PC-9 (cell line): ENCODE measurements at regions of chr13 and their contacts with region 1.

Region 1: GRCh38 chr13:63075126-63075525 is 1659.5 kb upstream of the PCDH20 start:
- DNase-seq: no peak
- H3K4me3 ChIP-seq: no peak overlapping the region
- H3K27ac ChIP-seq: no peak overlapping the region
- H3K4me1 ChIP-seq: no peaks in the 10 kb centered on the region
- H3K27me3 ChIP-seq: no peaks in the 10 kb centered on the region
- CTCF ChIP-seq: no peak

Region 2: DNA sequence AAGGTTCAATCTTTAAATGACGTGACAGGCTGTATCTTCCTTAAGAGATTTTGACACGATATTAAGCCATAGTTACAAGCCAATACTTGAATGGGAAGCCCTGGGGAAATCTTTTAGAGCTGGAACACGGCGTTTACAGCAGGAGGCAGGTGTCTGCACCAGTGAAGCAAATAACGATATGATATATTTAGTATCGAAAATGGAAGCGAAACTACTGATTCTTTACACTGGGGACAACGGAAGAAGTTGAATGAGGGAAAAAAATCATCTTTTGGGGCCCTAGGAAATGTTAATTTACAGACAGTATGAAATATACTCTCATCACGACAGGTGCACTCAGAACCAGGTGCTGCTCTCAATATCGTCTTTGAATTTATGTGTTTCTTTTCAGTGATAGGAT is 865.6 kb before region 1 on chr13:
- CTCF ChIA-PET with region 1: no interaction called
- POLR2A ChIA-PET with region 1: no interaction called
- intact Hi-C with region 1: no loop called
- DNase-seq: no peak
- H3K4me3 ChIP-seq: no peak overlapping the region
- H3K27ac ChIP-seq: no peak overlapping the region
- H3K4me1 ChIP-seq: no peaks in the 10 kb centered on the region
- H3K27me3 ChIP-seq: no peaks in the 10 kb centered on the region
- CTCF ChIP-seq: no peak

Region 3: DNA sequence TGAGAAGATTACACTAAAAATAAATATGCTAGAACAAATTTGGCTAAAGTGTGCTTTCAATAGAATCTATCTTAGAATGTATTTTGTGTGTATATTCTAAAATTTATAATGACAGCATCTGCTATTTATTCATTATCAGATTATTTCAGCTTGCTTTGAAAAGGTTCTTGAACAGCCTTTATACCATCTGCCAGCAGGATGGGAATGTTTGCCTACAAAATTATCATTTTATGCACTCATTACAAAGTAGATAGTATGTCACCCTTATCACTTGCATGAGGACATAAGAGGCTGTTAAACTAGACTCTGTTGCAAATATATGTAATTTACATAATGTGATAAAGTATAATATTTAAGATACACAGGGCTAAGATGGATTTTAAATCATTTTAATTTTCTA is 372.6 kb before region 1 on chr13:
- CTCF ChIA-PET with region 1: no interaction called
- POLR2A ChIA-PET with region 1: no interaction called
- intact Hi-C with region 1: no loop called
- DNase-seq: no peak
- H3K4me3 ChIP-seq: no peak overlapping the region
- H3K27ac ChIP-seq: no peak overlapping the region
- H3K4me1 ChIP-seq: no peaks in the 10 kb centered on the region
- H3K27me3 ChIP-seq: no peaks in the 10 kb centered on the region
- CTCF ChIP-seq: no peak

Region 4: DNA sequence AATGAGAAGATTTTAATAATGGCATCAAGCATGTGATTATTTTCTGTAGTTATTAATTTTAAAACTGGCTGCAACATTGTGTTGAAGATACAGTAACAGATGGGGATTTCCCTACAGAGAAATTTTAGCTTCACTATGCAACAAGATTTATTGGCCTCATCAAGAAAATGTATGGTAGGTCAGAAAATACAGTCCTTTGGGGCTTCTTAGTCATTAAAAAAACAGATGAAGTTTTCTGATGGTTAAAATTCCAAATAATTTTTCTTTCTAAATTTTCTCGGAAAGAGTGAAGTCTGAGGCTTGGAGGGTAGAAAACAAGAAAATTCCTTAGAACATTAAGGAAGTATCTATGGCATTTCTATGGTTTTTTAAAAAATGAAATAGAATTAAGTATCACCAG is 131.3 kb after region 1 on chr13:
- CTCF ChIA-PET with region 1: no interaction called
- POLR2A ChIA-PET with region 1: no interaction called
- intact Hi-C with region 1: no loop called
- DNase-seq: no peak
- H3K4me3 ChIP-seq: no peak overlapping the region
- H3K27ac ChIP-seq: no peak overlapping the region
- H3K4me1 ChIP-seq: no peaks in the 10 kb centered on the region
- H3K27me3 ChIP-seq: no peaks in the 10 kb centered on the region
- CTCF ChIP-seq: no peak

Region 5: DNA sequence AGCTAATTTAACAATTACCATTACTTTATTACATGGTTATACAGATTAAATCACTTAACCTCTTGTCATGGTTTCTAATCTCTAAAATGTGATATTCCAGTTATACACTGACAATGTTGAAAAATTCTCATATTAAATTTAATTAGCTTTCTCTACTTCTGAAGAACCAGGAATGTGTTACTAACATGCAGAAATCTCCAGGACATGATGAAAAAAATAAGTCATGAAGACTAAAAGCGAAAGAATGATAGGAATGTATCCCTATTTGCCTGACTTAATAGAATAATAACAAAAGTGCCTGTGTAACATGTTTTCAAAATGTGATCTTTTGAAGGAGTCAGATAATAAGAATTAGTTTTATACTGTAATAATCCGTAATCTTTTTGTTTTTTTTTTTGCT is 1164.2 kb after region 1 on chr13:
- CTCF ChIA-PET with region 1: no interaction called
- POLR2A ChIA-PET with region 1: interaction called, 11 read pairs
- intact Hi-C with region 1: no loop called
- DNase-seq: no peak
- H3K4me3 ChIP-seq: no peak overlapping the region
- H3K27ac ChIP-seq: no peak overlapping the region
- H3K4me1 ChIP-seq: no peaks in the 10 kb centered on the region
- H3K27me3 ChIP-seq: no peaks in the 10 kb centered on the region
- CTCF ChIP-seq: no peak